Calu3 (cell line): ENCODE measurements at regions of chr15 and their contacts with region 1.

Region 1: GRCh38 chr15:40274350-40275274 is 8.3 kb downstream of the ANKRD63 start:
- DNase-seq: peak; percentile 77
- H3K4me3 Mint-ChIP-seq: no peak overlapping the region
- H3K27ac Mint-ChIP-seq: no peak overlapping the region
- H3K4me1 Mint-ChIP-seq: no peaks in the 10 kb centered on the region
- H3K27me3 Mint-ChIP-seq: no peaks in the 10 kb centered on the region
- CTCF ChIP-seq: peak; percentile 89

Region 2: DNA sequence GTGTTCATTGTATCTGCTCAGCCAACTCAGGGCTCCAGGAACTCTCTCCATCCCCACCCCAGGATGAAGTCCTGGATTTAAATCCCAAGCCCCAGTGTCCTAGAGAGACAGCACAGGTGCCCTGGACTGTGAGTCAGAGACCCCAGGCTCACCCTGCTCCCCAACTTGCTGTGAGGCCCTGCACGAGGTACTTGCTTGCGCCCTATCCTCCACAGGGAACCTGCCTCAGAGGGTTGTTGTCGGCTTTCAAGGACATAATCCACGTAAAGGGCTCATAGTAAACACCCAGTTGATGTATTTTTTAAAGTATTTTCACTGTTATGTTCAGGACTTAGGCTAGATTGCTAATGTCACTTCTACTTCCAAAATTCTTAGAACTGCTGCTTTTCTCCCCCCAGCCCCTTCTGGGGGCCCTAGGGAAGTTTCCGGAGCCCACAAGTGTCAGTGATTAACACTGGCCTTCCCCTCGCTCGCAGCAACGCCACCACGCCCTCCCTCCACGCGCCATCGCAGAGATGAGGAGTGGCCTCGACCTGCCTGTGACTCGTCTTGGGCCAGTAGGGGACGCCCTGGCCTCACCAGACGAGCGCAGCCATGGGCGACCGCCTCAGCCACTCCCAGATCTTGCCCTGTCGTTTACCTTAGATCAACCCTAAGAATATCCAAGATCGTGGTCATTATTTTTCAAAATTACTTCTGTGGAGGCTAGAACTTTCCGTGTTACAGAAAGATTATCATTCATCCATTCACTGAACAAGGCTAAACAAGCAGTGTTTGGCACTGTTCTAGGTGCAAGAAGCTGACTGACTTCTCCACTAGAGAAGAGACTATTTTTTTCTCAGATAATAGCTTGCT is 229.7 kb before region 1 on chr15:
- CTCF ChIA-PET with region 1: interaction called, 9 read pairs
- intact Hi-C with region 1: loop called (anchors 5 kb)
- DNase-seq: peak; percentile 82
- H3K4me3 Mint-ChIP-seq: no peak overlapping the region
- H3K27ac Mint-ChIP-seq: no peak overlapping the region
- H3K4me1 Mint-ChIP-seq: peaks cover 10% of the 10 kb centered on the region
- H3K27me3 Mint-ChIP-seq: no peaks in the 10 kb centered on the region
- CTCF ChIP-seq: no peak

Region 3: DNA sequence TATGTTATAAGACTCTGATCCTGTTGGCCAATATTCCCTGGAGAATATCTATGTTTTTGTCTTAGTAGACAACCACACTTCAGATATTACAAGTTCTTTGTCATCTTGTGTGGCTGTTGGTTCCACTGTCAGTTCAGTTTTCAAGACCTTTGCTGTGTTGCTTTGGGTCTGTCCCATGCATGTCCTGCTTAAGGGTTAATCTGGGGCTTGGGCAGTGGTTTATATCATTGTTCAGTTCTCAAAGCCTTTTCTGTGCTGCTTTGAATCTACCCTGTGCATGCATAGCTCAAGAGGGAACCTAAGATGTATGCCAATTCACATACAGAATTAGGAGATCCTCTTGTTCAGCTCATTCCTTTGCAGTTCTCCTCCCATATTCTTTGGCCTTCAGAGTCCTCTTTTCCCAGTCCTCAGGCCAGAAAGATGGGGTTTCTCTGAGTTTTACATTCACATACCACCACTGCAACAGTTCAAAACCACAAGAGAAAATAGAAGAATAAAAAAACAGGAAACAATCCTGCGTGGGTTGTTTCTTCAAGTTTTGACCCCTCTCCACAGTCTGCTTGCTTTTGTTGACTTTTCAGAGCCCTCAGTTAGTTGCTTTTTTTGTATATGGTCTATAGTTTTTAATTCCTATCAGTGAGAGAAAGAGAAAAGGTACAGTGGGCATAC is 92.1 kb before region 1 on chr15:
- CTCF ChIA-PET with region 1: no interaction called
- intact Hi-C with region 1: no loop called
- DNase-seq: no peak
- H3K4me3 Mint-ChIP-seq: no peak overlapping the region
- H3K27ac Mint-ChIP-seq: no peak overlapping the region
- H3K4me1 Mint-ChIP-seq: no peaks in the 10 kb centered on the region
- H3K27me3 Mint-ChIP-seq: no peaks in the 10 kb centered on the region
- CTCF ChIP-seq: no peak

Region 4: GRCh38 chr15:40217159-40217824 is 57.3 kb before region 1 on chr15:
- CTCF ChIA-PET with region 1: interaction called, 39 read pairs
- intact Hi-C with region 1: loop called (anchors 1 kb)
- DNase-seq: peak; percentile 55
- H3K4me3 Mint-ChIP-seq: no peak overlapping the region
- H3K27ac Mint-ChIP-seq: no peak overlapping the region
- H3K4me1 Mint-ChIP-seq: no peaks in the 10 kb centered on the region
- H3K27me3 Mint-ChIP-seq: no peaks in the 10 kb centered on the region
- CTCF ChIP-seq: no peak

Region 5: DNA sequence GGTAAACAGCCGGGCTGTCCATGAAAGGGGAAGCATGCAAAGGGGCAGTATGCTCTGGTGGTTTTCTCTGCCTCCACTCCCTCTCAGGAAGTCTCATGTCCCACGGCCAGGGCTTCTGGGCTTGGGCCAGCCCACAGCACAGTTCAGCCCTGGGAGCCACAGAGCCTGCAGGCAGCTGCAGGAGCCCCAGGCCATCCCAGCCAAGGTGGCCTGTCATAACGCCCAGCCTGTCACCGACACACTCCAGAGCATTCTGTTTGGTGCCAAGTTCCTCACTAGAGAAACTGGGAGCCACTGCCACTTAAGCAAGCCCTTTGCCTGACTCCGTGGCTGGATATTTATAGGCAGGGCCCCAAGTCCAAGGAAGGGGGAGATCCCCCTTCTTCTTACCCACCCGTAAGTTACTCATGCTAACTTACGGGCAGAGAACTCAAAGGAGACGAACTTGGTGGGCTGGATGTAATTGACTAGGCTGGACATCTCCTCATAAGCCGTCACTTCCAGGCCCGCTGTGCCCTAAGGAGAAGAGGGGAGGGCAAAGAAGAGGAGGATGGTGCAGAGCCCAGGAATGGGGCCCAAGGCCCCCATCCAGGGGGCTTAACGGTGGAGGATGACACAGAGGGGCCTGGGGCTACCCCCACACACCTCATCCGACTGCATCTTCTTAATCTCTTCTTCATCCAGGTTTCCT is 21.4 kb after region 1 on chr15:
- CTCF ChIA-PET with region 1: no interaction called
- intact Hi-C with region 1: no loop called
- DNase-seq: no peak
- H3K4me3 Mint-ChIP-seq: no peak overlapping the region
- H3K27ac Mint-ChIP-seq: no peak overlapping the region
- H3K4me1 Mint-ChIP-seq: no peaks in the 10 kb centered on the region
- H3K27me3 Mint-ChIP-seq: no peaks in the 10 kb centered on the region
- CTCF ChIP-seq: no peak

Region 6: DNA sequence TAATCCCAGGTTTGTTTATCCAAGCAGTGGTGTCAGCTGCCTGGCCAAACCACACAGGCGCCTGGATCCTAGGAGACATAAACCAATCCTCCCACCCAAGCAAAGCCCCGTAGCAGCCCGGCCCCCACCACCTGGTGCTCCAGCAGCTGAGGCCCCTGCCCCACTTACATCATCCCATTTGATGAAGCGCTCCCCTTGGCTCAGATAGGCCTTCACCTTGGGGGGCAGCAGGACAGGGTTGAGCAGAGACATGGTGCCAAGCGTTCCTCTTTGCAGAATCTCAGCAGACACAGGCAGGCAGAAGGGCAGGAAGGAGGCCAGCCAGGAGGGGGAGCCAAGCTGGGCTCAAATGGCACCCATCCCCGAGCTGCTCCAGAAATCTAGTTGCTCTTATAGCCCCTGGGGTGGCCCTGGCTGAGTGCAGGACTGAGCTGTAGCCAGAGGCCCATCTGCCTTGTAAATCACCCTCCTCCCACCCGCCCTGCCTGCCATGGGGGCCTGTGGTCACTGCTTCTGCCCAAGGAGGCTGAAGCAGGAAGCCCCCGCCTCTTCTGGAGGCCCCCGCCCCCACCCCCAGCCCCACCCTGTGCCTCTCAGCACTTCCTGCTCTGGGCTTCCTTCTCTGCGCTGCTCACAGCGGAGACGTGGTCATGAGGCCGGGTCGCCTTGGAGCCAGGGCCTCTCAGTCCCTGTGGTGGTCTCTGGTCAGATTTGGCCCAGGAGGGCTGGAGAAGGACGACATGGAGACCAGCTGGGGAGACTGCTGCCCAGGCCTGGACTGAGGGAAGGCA is 33.0 kb after region 1 on chr15 and contains the start of gene PLCB2:
- CTCF ChIA-PET with region 1: interaction called, 17 read pairs
- intact Hi-C with region 1: loop called (anchors 1 kb)
- DNase-seq: peak; percentile 50
- H3K4me3 Mint-ChIP-seq: peak within 1 kb of the TSS; percentile 63
- H3K27ac Mint-ChIP-seq: peak within 1 kb of the TSS; percentile 71
- H3K4me1 Mint-ChIP-seq: peaks cover 17% of the 10 kb centered on the region
- H3K27me3 Mint-ChIP-seq: no peaks in the 10 kb centered on the region
- CTCF ChIP-seq: no peak
- total RNA-seq, gene PLCB2: 37.3 and 43.1 TPM in 2 replicates

Region 7: DNA sequence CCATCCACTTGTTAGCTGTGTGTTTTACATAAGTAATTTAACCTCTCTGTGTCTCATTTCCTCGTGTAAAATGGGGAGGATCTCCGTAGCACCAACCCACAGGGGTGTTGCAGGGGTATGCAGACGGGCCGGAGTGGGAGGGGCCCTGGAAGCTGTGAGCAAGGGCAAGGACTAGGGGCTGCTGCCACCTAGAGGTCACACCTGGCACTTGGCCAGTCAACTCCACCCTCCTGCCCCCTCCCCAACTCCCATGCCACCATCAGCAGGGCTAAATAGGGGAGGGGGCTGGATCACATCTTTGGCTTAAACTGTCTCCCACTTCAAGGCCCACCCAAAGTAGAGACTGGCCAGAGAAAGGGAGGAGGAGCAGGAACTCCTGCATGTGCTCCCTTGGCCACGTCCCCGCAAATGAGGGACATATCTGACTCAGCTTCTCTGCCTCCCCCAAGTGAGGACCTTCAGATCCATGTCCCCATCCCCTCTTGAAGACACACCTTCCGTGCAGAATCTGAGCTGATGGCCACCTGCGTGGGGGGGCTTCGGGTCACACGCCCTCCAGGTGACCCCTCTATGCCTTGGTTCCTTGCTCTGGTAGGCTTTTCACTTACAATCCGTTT is 63.5 kb after region 1 on chr15:
- CTCF ChIA-PET with region 1: interaction called, 11 read pairs
- intact Hi-C with region 1: no loop called
- DNase-seq: peak; percentile 74
- H3K4me3 Mint-ChIP-seq: peak overlapping the region; percentile 77
- H3K27ac Mint-ChIP-seq: peak overlapping the region; percentile 89
- H3K4me1 Mint-ChIP-seq: peaks cover 25% of the 10 kb centered on the region
- H3K27me3 Mint-ChIP-seq: no peaks in the 10 kb centered on the region
- CTCF ChIP-seq: peak; percentile 43

Region 8: DNA sequence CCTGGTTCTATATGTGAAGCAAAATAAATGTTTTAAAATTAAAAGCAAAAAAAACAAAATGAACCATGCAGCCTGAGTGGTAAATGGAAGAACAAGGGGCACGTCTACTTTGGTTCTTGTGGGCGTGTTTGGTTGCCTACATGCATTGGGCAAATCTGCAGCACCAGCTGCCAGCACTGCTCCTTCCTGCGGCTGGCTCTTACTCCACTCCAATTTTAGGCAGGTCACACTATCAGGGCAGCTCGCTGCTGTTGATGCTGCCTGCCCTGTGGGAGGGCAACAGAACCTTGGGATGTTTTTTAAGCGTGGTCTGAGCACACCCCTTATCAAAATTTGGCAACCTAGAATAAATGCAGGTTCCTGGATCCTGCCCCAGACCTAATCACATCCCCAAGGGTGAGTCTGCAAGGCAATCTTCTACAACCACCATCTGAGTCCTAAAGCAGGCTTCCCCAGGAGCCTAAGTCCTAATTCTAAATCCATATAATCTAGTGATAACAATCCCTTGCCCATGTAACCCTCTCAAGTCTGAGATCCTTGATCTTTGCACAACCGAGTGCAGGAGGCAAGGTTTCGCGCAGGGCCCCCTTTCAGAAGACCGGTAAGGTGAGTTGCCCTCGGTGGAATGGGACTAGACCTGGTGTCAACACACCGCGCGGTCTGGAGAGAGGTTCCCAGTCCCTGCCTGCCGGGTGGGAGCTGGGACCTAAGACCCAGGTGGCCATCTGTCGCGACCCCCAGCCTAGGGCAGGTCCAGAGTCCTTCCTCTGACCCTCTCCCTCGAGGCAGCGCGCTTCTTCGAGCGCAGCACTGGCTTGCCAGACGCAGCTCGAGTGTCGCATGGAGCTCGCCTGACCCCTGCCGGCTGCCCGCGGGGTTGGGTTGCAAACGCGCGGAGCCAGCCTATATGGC is 146.9 kb after region 1 on chr15:
- CTCF ChIA-PET with region 1: interaction called, 6 read pairs
- intact Hi-C with region 1: loop called (anchors 2 kb)
- DNase-seq: peak; percentile 78
- H3K4me3 Mint-ChIP-seq: no peak overlapping the region
- H3K27ac Mint-ChIP-seq: no peak overlapping the region
- H3K4me1 Mint-ChIP-seq: peaks cover 10% of the 10 kb centered on the region
- H3K27me3 Mint-ChIP-seq: no peaks in the 10 kb centered on the region
- CTCF ChIP-seq: peak; percentile 73